PC-9 (cell line): ENCODE measurements at regions of chr3 and their contacts with region 1.

Region 1: DNA sequence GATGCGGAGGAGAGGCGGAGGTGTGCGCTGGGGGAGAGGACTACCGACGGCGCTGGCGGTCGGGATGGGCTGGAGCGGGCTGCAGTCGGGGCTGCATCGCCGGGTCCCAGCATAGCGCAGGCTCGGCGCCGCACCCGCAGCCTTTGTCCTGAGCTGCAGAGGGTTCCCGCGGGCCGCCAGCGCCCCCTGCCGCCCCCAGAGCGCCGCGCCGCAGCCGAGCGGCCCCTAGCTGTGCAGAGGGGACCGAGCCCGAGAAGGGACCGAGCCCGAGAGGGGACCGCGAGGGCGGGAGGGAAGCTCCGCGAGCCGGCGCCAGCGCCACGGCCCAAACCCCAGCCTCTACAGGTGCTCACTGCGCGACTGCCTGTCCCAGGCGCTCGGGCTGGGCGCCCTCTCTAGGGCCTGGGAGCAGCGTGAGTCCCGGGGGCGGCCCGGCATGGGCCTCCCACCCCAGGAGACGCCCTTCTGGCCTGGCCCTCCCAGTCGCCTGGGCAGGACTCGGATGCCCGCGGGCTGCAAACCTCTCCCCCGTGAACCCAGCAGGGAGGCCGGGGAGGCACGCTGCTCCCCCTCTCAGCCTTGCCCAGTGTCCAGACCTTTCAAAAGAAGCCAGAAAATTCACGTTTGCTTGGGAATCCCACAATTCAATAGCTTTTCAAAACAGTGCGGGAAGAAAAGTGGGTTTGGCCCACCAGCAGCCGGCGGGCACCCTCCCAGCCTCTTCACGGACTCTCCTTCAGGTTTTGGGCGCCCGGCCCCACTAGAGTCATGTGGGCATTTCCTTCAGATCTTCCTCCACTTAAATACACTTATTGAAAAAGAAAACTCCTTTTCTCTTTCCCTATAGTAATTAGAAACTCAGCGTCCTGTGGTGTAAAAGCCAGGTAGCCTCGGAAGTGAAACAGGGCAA is 134.7 kb downstream of the TPRA1 start:
- DNase-seq: peak in 1 of 2 experiments; percentile 90
- H3K4me3 ChIP-seq: peak overlapping the region; percentile 39; the same call in 1 of the 2 replicates
- H3K27ac ChIP-seq: no peak overlapping the region
- H3K4me1 ChIP-seq: peaks cover 11% of the 10 kb centered on the region
- H3K27me3 ChIP-seq: peaks cover 60% of the 10 kb centered on the region
- CTCF ChIP-seq: peak; percentile 82

Region 2: GRCh38 chr3:126679318-126679751 is 776.5 kb before region 1 on chr3:
- CTCF ChIA-PET with region 1: no interaction called
- POLR2A ChIA-PET with region 1: interaction called, 7 read pairs
- intact Hi-C with region 1: loop called (anchors 1 kb)
- DNase-seq: peak; percentile 59 to 88
- H3K4me3 ChIP-seq: no peak overlapping the region
- H3K27ac ChIP-seq: no peak overlapping the region
- H3K4me1 ChIP-seq: no peaks in the 10 kb centered on the region
- H3K27me3 ChIP-seq: peaks cover 12% of the 10 kb centered on the region
- CTCF ChIP-seq: peak; percentile 97

Region 3: DNA sequence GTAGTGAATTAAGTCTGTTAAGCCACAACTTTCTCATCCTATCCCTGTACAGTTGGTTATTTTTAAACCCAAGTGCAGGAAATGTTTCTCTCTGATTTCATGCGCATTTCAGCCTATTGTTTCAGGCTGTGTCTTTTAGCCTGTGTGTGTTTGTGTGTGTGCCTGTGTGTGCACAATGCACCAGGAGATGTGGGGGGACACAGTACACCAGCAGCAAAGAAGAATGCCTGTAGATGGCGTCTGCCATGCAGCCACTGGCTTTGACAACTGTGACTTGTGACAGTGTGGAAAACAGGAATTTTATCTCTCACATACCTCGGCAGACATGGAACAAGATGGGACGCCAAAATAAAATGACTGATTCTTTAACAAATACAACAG is 516.5 kb before region 1 on chr3:
- CTCF ChIA-PET with region 1: no interaction called
- POLR2A ChIA-PET with region 1: no interaction called
- intact Hi-C with region 1: no loop called
- DNase-seq: no peak
- H3K4me3 ChIP-seq: no peak overlapping the region
- H3K27ac ChIP-seq: no peak overlapping the region
- H3K4me1 ChIP-seq: peaks cover 10% of the 10 kb centered on the region
- H3K27me3 ChIP-seq: no peaks in the 10 kb centered on the region
- CTCF ChIP-seq: no peak

Region 4: DNA sequence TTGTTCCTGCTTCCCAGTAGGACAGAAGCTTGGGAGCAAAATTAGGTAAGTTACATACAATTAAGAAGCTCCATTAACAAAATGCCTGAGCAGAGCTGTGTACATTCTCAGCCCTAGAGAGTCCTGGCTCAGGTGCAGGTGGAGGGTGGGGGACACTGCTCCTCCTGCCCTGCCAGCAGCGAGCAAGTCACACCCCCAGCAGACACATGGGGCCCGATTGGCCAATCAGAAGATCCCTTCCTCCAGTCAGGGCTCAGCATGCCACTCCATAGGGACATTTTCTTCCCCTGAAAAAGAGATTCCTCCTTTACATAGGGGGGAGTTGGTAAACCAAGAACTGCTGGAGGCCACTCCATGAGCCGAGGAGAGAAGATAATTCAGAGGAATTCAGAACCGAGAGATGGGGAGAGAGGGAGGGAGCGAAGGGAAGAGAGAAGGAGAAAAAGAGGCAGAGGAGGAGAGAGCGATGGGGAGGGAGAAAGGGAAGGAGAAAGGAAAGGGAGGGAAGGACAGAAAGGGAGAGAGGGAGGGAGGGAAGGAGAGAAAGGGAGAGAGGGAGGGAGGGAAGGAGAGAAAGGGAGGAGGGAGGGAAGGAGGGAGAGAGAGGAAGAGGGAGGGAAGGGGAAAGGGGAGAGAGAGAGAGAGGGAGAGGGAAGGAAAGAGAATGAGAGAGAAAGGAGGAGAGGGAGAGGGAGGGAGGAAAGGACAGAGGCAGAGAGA is 410.6 kb before region 1 on chr3:
- CTCF ChIA-PET with region 1: no interaction called
- POLR2A ChIA-PET with region 1: no interaction called
- intact Hi-C with region 1: loop called (anchors 1 kb)
- DNase-seq: peak in 1 of 2 experiments; percentile 56
- H3K4me3 ChIP-seq: no peak overlapping the region
- H3K27ac ChIP-seq: no peak overlapping the region
- H3K4me1 ChIP-seq: peaks cover 26% of the 10 kb centered on the region
- H3K27me3 ChIP-seq: peaks cover 4% of the 10 kb centered on the region; the same call in 1 of the 2 replicates
- CTCF ChIP-seq: no peak

Region 5: GRCh38 chr3:127585493-127586413 is 130.0 kb after region 1 on chr3:
- CTCF ChIA-PET with region 1: no interaction called
- POLR2A ChIA-PET with region 1: interaction called, 15 read pairs
- intact Hi-C with region 1: no loop called
- DNase-seq: no peak
- H3K4me3 ChIP-seq: no peak overlapping the region
- H3K27ac ChIP-seq: no peak overlapping the region
- H3K4me1 ChIP-seq: peaks cover 12% of the 10 kb centered on the region
- H3K27me3 ChIP-seq: no peaks in the 10 kb centered on the region
- CTCF ChIP-seq: no peak